Activated CD8-positive, alpha-beta T cell treated with anti-CD3 and anti-CD28 coated beads, Interleukin-2, amount 10 ng/mL, durations not matched to agents 7 days and 5 days (primary cell): ENCODE measurements at regions of chr7 and their contacts with region 1.

Region 1: DNA sequence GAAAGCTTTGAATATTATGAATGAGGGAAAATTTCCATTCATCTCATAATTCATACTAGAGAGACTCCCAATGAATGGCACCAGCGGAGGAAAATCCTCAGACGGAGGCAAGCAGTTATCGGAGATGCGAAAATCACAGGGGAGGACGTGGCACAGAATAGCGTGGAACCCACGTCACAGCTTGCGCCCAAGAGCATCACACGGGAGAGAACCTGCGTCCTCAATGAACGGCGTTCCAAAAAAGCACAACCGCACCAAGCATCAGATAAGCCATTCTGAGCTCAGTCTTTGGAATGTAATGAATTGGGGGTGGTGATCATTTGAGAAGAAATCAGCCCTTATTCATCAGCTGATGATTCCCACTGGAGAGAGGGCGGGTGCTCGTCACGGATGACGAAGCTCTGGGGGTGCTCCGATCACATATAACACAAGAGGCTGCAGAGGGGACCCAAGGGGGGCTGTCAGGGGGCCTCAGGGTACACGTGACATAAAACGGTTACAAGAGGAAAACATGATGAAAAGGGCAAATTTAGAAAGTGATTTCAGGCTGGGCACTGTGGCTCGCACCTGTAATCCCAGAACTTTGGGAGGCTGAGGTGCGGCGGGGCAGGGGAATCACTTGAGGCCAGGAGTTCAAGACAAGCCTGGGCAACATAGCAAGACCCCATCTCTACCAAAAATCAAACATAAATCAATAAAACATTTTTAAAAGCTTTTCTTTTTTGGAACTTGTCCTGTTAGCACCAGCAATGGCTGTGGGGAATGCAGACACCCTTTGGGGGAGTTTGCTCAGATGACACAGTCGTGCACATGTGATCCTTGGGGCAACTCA is 33.8 kb upstream of the FIS1 start:
- DNase-seq: no peak
- ATAC-seq: no peak
- H3K4me3 Mint-ChIP-seq: no peak overlapping the region
- H3K27ac Mint-ChIP-seq: no peak overlapping the region
- H3K4me1 Mint-ChIP-seq: peaks cover 6% of the 10 kb centered on the region
- H3K27me3 Mint-ChIP-seq: peaks cover 4% of the 10 kb centered on the region

Region 2: DNA sequence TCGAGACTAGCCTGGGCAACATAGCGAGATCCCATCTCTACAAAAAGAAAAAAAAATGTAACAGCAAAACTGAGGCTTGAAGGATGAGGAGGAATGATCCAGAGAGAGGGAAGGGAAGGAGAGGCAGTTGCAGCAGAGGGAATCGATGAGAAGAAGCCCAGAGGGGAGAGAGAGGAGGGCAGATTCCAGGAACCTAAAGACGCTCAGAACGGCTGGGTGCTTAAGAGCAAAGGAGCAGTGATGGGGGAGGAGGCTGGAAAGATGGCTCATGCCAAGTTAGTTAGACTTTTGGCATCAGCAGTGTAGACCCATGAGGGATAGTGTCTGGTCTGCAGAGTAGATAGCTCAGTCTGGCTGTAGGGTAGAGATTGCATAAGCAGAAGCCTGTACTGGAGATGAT is 269.0 kb before region 1 on chr7:
- CTCF ChIA-PET with region 1: no interaction called
- POLR2A ChIA-PET with region 1: no interaction called
- DNase-seq: no peak
- ATAC-seq: no peak
- H3K4me3 Mint-ChIP-seq: no peak overlapping the region
- H3K27ac Mint-ChIP-seq: no peak overlapping the region
- H3K4me1 Mint-ChIP-seq: no peaks in the 10 kb centered on the region
- H3K27me3 Mint-ChIP-seq: no peaks in the 10 kb centered on the region

Region 3: DNA sequence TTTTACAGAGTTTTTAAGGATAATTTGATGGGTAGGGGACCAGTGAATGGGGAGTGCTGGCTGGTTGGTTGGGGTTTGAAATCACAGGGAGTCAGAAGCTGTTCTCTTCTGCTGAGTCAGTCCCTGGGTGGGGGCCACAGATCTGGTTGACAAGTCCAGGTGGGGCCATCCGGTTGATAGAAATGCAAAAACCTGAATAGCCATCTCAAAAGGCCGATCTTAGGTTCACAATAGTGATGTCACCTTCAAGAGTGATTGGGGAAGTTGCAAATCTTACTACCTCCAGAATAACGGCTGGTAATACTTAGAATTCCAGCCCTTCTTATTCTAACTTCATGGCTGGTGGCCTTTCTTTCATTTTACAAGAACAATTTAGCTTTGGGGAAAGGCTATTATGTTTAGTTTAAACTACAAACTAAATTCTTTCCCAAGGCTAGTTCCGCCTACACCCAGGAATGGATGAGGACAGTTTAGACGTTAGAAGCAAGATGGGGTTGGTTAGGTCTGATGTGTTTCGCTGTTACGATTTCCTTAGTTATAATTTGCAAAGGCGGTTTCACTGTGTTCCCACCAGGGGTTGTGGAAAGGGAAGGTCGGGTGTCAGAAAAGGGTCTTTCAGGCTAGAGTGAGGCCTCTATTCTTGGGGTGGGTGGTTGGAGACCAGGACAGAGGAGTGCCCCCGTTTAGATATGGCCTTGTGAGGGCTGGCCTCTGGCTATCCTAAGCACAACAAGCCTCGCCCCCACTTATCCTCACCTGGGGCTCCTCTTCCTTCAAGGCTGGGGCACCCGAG is 15.6 kb after region 1 on chr7:
- CTCF ChIA-PET with region 1: interaction called, 48 read pairs
- POLR2A ChIA-PET with region 1: no interaction called
- DNase-seq: no peak
- ATAC-seq: no peak
- H3K4me3 Mint-ChIP-seq: no peak overlapping the region
- H3K27ac Mint-ChIP-seq: no peak overlapping the region
- H3K4me1 Mint-ChIP-seq: peaks cover 8% of the 10 kb centered on the region
- H3K27me3 Mint-ChIP-seq: peaks cover 22% of the 10 kb centered on the region

Region 4: GRCh38 chr7:101405474-101406067 is 126.9 kb after region 1 on chr7:
- CTCF ChIA-PET with region 1: no interaction called
- POLR2A ChIA-PET with region 1: no interaction called
- DNase-seq: no peak
- ATAC-seq: no peak
- H3K4me3 Mint-ChIP-seq: no peak overlapping the region
- H3K27ac Mint-ChIP-seq: no peak overlapping the region
- H3K4me1 Mint-ChIP-seq: no peaks in the 10 kb centered on the region
- H3K27me3 Mint-ChIP-seq: peaks cover 12% of the 10 kb centered on the region

Region 5: GRCh38 chr7:101453617-101454016 is 174.9 kb after region 1 on chr7:
- CTCF ChIA-PET with region 1: no interaction called
- POLR2A ChIA-PET with region 1: no interaction called
- DNase-seq: no peak
- ATAC-seq: no peak
- H3K4me3 Mint-ChIP-seq: no peak overlapping the region
- H3K27ac Mint-ChIP-seq: no peak overlapping the region
- H3K4me1 Mint-ChIP-seq: no peaks in the 10 kb centered on the region
- H3K27me3 Mint-ChIP-seq: no peaks in the 10 kb centered on the region